HEK293 (cell line): ENCODE measurements at regions of chr3 and their contacts with region 1.

Region 1: GRCh38 chr3:15205934-15206661 is at the start of gene CAPN7:
- H3K4me3 ChIP-seq: peak within 1 kb of the TSS; percentile 97
- H3K27ac ChIP-seq: peak within 1 kb of the TSS; percentile 79
- H3K4me1 ChIP-seq: peaks cover 9% of the 10 kb centered on the region
- CTCF ChIP-seq: peak; percentile 94

Region 2: DNA sequence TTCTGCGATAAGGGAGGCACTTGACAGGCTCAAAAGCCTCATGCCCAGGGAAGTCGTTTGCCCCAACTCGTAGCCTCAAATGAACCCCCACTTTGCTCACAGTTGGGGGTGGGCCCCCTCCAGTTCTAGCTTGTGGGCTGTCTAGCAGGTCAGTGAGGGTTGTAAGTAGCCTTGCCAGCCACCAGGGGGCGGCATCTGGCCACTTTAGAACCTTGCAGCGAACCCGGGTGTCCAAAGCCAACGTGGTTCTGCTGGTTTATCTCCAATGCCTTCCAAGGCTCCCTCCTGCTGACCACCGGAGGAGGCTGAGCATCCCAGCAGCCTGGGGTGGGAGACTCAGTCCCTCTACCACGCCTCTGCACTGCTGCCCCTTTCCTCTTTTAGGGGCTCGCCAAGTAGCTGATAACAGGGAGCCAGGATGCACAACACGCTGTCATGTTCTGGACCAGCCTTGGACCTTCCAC is 98.0 kb before region 1 on chr3:
- CTCF ChIA-PET with region 1: interaction called, 23 read pairs
- POLR2A ChIA-PET with region 1: interaction called, 3 read pairs
- H3K4me3 ChIP-seq: no peak overlapping the region
- H3K27ac ChIP-seq: no peak overlapping the region
- H3K4me1 ChIP-seq: no peaks in the 10 kb centered on the region
- CTCF ChIP-seq: peak; percentile 81

Region 3: GRCh38 chr3:15241341-15241740 is 35.2 kb after region 1 on chr3:
- CTCF ChIA-PET with region 1: interaction called, 12 read pairs
- POLR2A ChIA-PET with region 1: no interaction called
- H3K4me3 ChIP-seq: no peak overlapping the region
- H3K27ac ChIP-seq: no peak overlapping the region
- H3K4me1 ChIP-seq: no peaks in the 10 kb centered on the region
- CTCF ChIP-seq: no peak

Region 4: GRCh38 chr3:15368561-15369135 is 162.6 kb after region 1 on chr3:
- CTCF ChIA-PET with region 1: no interaction called
- POLR2A ChIA-PET with region 1: no interaction called
- H3K4me3 ChIP-seq: no peak overlapping the region
- H3K27ac ChIP-seq: no peak overlapping the region
- H3K4me1 ChIP-seq: no peaks in the 10 kb centered on the region; the same call in 1 of the 2 replicates
- CTCF ChIP-seq: no peak

Region 5: GRCh38 chr3:15405448-15406050 is 199.5 kb after region 1 on chr3:
- CTCF ChIA-PET with region 1: interaction called, 49 read pairs
- POLR2A ChIA-PET with region 1: no interaction called
- H3K4me3 ChIP-seq: no peak overlapping the region
- H3K27ac ChIP-seq: no peak overlapping the region
- H3K4me1 ChIP-seq: no peaks in the 10 kb centered on the region
- CTCF ChIP-seq: no peak

Region 6: GRCh38 chr3:15557511-15557946 is 351.4 kb after region 1 on chr3:
- CTCF ChIA-PET with region 1: interaction called, 10 read pairs
- POLR2A ChIA-PET with region 1: no interaction called
- H3K4me3 ChIP-seq: no peak overlapping the region
- H3K27ac ChIP-seq: no peak overlapping the region
- H3K4me1 ChIP-seq: no peaks in the 10 kb centered on the region
- CTCF ChIP-seq: peak; percentile 45